ENCODE measurements at regions of chr3 and their contacts with region 1.

Region 1: DNA sequence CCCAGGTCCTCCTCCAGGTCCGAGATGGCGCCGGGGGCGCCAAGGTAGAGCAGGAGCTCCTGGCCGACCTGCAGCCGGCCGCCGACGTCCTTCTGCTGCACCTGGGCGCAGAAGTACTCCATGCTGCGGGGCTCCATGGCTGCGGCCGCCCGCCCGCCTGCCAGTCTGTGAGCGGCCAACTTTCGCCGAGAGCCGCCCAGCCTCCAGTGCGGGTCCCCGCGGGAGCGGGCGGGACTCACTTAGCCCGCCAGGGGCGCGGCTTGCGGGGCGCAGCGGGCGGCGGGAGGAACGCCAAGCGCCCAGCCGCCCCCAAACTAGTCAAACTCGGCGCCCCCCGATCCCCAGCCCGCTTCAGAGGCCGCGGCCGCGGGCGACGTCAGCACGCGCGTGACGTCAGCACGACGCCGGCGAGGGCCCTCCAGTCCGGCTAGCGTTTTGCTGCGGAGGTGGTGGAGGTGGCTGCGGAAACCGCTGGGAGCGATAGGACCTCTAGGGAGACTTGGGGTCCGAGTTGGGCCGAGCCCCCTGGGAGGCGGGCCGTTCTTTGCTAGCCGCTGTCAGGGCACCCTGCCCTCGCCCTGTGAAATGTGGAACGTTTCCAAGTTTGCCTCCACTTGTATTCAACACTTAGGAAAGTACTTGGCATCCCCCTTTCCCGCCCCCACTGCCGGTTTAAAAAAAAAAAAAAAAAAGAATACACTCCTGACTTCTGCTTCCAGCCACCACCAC is at the start of gene CLASP2:
- DNase-seq: peak; percentile 93
- ATAC-seq: peak; percentile 98
- total RNA-seq, gene CLASP2: 68.3 TPM

Region 2: GRCh38 chr3:33658991-33659848 is 58.8 kb before region 1 on chr3:
- intact Hi-C with region 1: loop called (anchors 5 kb)
- DNase-seq: peak; percentile 83
- ATAC-seq: peak; percentile 98

Region 3: GRCh38 chr3:33947272-33948195 is 229.5 kb after region 1 on chr3:
- intact Hi-C with region 1: no loop called
- DNase-seq: no peak
- ATAC-seq: no peak